Endothelial cell of umbilical vein (primary cell): ENCODE measurements at regions of chr15 and their contacts with region 1.

Region 1: GRCh38 chr15:55775316-55775715 is 32.4 kb upstream of the PRTG start:
- DNase-seq: no peak
- H3K4me3 ChIP-seq: no peak overlapping the region
- H3K27ac ChIP-seq: no peak overlapping the region
- H3K4me1 ChIP-seq: no peaks in the 10 kb centered on the region
- H3K27me3 ChIP-seq: peaks cover 5% of the 10 kb centered on the region in 2 experiments
- CTCF ChIP-seq: no peak
- POLR2A ChIP-seq: no peak

Region 2: DNA sequence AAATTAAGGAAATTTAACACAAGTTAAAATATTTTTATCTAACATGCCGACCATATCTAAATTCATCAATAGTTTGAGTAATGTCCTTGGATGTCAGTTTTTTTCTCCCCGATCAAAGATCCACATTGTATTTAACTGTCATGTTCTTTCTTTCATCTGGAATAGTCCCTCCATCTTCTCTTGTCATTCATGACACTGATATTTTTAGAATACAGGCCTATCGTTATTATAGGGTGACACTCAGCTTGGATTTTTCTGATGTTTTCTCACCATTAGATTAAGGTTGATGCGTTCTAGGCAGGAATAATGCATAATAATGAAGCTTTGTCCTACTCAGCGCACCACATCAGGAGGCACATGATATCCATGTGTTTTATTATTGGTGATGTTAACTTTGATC is 173.9 kb before region 1 on chr15:
- CTCF ChIA-PET with region 1: no interaction called
- POLR2A ChIA-PET with region 1: no interaction called
- dilution Hi-C with region 1: no loop called
- intact Hi-C with region 1: no loop called
- DNase-seq: no peak
- H3K4me3 ChIP-seq: no peak overlapping the region
- H3K27ac ChIP-seq: no peak overlapping the region
- H3K4me1 ChIP-seq: no peaks in the 10 kb centered on the region
- H3K27me3 ChIP-seq: no peaks in the 10 kb centered on the region
- CTCF ChIP-seq: no peak
- POLR2A ChIP-seq: no peak

Region 3: GRCh38 chr15:55764398-55764797 is 10.9 kb before region 1 on chr15:
- CTCF ChIA-PET with region 1: interaction called, 40 read pairs
- POLR2A ChIA-PET with region 1: interaction called, 3 read pairs
- dilution Hi-C with region 1: no loop called
- intact Hi-C with region 1: no loop called
- DNase-seq: no peak
- H3K4me3 ChIP-seq: no peak overlapping the region
- H3K27ac ChIP-seq: no peak overlapping the region
- H3K4me1 ChIP-seq: no peaks in the 10 kb centered on the region
- H3K27me3 ChIP-seq: no peaks in the 10 kb centered on the region
- CTCF ChIP-seq: no peak
- POLR2A ChIP-seq: no peak

Region 4: GRCh38 chr15:55897560-55898336 is 122.4 kb after region 1 on chr15:
- CTCF ChIA-PET with region 1: no interaction called
- POLR2A ChIA-PET with region 1: no interaction called
- dilution Hi-C with region 1: no loop called
- intact Hi-C with region 1: no loop called
- DNase-seq: peak; percentile 67
- H3K4me3 ChIP-seq: peak overlapping the region in 1 of 3 experiments; percentile 23
- H3K27ac ChIP-seq: peak overlapping the region; percentile 96
- H3K4me1 ChIP-seq: peaks cover 38% of the 10 kb centered on the region
- H3K27me3 ChIP-seq: no peaks in the 10 kb centered on the region
- CTCF ChIP-seq: peak; percentile 67 to 76
- POLR2A ChIP-seq: no peak

Region 5: GRCh38 chr15:55999636-56000035 is 224.3 kb after region 1 on chr15:
- CTCF ChIA-PET with region 1: no interaction called
- POLR2A ChIA-PET with region 1: no interaction called
- dilution Hi-C with region 1: no loop called
- intact Hi-C with region 1: no loop called
- DNase-seq: no peak
- H3K4me3 ChIP-seq: no peak overlapping the region
- H3K27ac ChIP-seq: no peak overlapping the region
- H3K4me1 ChIP-seq: no peaks in the 10 kb centered on the region
- H3K27me3 ChIP-seq: no peaks in the 10 kb centered on the region
- CTCF ChIP-seq: no peak
- POLR2A ChIP-seq: no peak